HEK293T (cell line): ENCODE measurements at regions of chr1 and their contacts with region 1.

Region 1: GRCh38 chr1:159469921-159470533 is 30.5 kb downstream of the OR10J1 start:
- DNase-seq: no peak

Region 2: GRCh38 chr1:160748181-160748877 is 1278.3 kb after region 1 on chr1:
- CTCF ChIA-PET with region 1: interaction called, 12 read pairs
- POLR2A ChIA-PET with region 1: no interaction called
- DNase-seq: no peak